ENCODE measurements at regions of chr3 and their contacts with region 1.

Region 1: DNA sequence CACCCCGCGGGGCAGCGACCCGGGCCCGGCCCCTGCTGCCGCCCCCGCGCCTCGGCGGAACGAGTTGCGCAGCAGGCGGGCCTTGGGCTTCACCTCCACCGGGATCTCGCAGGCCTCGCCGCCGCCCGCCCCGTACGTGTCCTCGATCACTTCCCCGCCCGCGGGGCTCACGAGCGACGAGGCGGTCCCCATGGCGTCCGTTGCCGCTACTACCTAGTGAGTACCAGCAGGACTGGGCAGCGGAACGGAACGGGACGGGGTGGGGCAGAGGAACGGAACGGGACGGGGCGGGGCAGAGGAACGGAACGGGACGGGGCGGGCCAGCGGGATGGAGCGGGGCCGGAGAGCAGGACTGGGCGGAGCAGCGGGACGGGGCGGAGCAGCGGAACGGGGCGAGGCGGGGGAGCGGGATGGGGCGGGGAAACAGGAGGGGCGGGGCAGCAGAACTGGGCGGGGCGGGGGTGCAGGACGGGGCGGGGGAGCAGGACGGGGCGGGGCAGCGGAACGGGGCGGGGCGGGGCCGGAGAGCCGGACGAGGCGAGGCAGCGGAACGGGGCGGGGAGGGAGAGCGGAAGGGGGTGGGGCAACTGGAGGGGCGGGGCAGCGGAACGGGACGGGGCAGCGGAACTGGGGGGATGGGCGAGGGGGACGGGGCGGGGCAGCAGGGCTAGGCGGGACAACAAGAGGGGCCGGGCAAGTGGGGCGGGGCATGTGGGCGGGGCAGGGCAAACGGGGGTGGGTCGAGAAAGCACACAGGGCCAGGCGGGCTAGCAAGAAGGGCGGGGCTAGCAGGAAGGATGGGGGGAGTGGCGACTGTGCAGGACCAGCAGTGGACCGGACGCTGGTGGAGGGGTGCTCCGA is at the start of gene NPHP3:
- DNase-seq: peak; percentile 82
- ATAC-seq: peak; percentile 80
- H3K4me3 Mint-ChIP-seq: peak within 1 kb of the TSS; percentile 90
- H3K27ac Mint-ChIP-seq: peak within 1 kb of the TSS; percentile 85
- H3K4me1 Mint-ChIP-seq: peaks cover 31% of the 10 kb centered on the region
- H3K27me3 Mint-ChIP-seq: no peaks in the 10 kb centered on the region
- CTCF ChIP-seq: no peak
- total RNA-seq, gene NPHP3: 20.2 and 23.2 TPM in 2 replicates

Region 2: DNA sequence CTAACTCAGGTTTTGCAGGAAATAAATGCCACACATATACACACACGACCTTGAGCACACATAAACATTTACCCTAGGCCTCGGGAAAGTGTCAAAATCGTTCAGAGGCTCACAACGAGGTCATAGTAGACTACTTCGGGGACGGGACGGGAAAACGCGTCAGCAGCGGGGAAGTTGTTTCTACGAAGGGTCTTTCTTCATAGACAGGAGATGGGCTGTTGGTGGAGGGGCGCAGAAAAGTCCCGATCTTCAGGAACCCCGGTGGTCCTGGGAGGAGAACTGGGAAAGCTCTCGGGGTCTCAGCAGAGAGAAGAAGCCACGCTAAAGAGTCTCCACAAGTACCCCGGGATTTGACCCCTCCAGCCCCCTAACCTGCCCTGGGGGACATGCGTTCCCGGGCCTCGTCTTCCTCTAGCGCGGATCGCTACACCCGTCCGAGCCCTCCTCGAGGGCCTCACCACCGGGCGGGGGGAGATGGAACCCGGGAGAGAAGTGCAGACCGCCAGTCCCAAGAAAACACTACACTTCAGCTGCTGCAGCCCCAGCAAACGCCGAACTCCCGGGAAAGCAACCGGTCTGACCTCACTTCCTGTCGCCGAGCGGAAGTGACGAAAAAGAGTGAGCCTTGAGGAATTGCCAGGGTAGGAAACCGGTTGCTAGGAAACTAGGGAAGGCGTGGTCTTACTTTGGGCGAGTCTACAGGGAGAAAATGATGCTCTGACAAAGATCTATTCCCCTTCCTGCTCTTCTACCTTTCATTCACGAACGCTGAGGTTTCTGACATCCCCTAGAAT is 1976.0 kb before region 1 on chr3 and contains the start of gene PIK3R4:
- CTCF ChIA-PET with region 1: no interaction called
- POLR2A ChIA-PET with region 1: no interaction called
- intact Hi-C with region 1: loop called (anchors 5 kb)
- DNase-seq: peak; percentile 82
- ATAC-seq: peak; percentile 80
- H3K4me3 Mint-ChIP-seq: peak within 1 kb of the TSS; percentile 87
- H3K27ac Mint-ChIP-seq: peak within 1 kb of the TSS; percentile 91
- H3K4me1 Mint-ChIP-seq: peaks cover 53% of the 10 kb centered on the region
- H3K27me3 Mint-ChIP-seq: no peaks in the 10 kb centered on the region
- CTCF ChIP-seq: no peak
- total RNA-seq, gene PIK3R4: 22.1 and 32.4 TPM in 2 replicates

Region 3: DNA sequence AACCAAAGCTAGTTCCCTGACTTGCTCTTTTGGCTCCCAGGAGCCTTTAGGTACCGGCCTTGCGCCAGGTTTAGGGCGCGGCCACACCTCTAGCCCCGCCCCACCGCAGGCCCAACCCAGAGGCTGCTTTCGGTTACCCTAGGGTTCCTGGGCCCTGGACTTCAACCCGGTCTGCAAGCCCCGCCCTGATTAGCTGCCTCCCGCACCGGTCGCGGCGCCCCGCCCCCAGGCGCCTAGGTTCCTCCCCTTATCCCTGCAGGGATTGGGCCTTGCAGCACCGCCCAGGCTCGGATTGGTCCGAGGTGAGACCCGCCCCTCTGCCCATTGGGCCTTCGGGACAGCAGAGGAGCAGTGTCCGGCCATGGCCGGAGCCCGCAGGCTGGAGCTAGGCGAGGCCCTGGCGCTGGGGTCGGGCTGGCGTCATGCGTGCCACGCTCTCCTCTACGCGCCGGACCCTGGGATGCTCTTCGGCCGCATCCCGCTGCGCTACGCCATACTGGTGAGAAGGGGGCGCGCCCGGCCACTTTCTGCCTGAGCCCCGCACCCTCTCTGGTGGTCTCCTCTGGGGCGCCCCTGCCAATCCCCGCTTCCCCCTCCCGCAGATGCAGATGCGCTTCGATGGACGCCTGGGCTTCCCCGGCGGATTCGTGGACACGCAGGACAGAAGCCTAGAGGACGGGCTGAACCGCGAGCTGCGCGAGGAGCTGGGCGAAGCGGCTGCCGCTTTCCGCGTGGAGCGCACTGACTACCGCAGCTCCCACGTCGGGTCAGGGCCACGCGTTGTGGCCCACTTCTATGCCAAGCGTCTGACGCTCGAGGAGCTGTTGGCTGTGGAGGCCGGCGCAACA is 1340.7 kb before region 1 on chr3 and contains the start of gene NUDT16:
- CTCF ChIA-PET with region 1: no interaction called
- POLR2A ChIA-PET with region 1: no interaction called
- intact Hi-C with region 1: loop called (anchors 1 kb)
- DNase-seq: peak; percentile 98
- ATAC-seq: peak; percentile 98
- H3K4me3 Mint-ChIP-seq: peak within 1 kb of the TSS; percentile 97
- H3K27ac Mint-ChIP-seq: peak within 1 kb of the TSS; percentile 92
- H3K4me1 Mint-ChIP-seq: peaks cover 24% of the 10 kb centered on the region
- H3K27me3 Mint-ChIP-seq: no peaks in the 10 kb centered on the region
- CTCF ChIP-seq: no peak
- total RNA-seq, gene NUDT16: 15.8 TPM in 2 replicates

Region 4: GRCh38 chr3:132695422-132695821 is 27.0 kb before region 1 on chr3:
- CTCF ChIA-PET with region 1: no interaction called
- POLR2A ChIA-PET with region 1: no interaction called
- intact Hi-C with region 1: no loop called
- DNase-seq: no peak
- ATAC-seq: no peak
- H3K4me3 Mint-ChIP-seq: no peak overlapping the region
- H3K27ac Mint-ChIP-seq: no peak overlapping the region
- H3K4me1 Mint-ChIP-seq: no peaks in the 10 kb centered on the region
- H3K27me3 Mint-ChIP-seq: no peaks in the 10 kb centered on the region
- CTCF ChIP-seq: no peak

Region 5: DNA sequence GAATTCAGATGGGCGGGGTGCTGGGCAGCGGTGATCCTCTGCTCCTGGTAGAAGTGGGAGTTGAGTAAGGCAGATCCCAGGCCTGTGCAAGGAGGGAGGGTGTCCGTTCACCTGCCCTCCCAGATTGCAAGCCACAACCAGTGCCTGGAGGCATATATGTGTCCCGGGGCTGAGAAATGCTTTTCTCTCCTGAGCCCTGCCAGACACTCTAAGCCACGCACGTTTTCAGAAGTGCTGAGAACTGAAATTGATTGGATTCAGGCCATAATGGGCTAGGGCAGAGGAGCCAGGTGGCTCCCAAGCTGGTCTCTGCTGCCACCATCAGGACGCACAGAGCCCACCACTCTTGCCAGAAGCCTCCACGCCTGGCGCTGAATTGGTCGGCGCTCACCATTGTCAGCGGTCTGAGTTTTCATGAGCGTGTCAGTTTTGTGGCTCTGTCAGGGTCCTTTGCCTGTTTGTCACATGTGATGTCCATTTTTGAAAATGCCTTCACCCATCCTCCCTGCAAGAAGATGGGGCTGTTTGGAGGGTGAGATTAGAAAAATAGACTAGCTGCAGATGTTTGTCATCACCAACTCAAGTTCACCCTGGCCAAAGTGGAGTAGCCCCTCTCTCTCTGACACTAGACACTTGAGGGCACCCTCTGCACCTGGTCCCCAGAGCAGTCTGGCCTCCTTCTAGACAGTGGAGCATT is 662.1 kb after region 1 on chr3:
- CTCF ChIA-PET with region 1: interaction called, 15 read pairs
- POLR2A ChIA-PET with region 1: no interaction called
- intact Hi-C with region 1: loop called (anchors 1 kb)
- DNase-seq: peak; percentile 22
- ATAC-seq: peak; percentile 73
- H3K4me3 Mint-ChIP-seq: no peak overlapping the region
- H3K27ac Mint-ChIP-seq: no peak overlapping the region
- H3K4me1 Mint-ChIP-seq: no peaks in the 10 kb centered on the region
- H3K27me3 Mint-ChIP-seq: peaks cover 11% of the 10 kb centered on the region
- CTCF ChIP-seq: no peak

Region 6: GRCh38 chr3:133661454-133662277 is 939.3 kb after region 1 on chr3 and contains the start of gene TOPBP1:
- CTCF ChIA-PET with region 1: interaction called, 4 read pairs
- POLR2A ChIA-PET with region 1: no interaction called
- intact Hi-C with region 1: loop called (anchors 2 kb)
- DNase-seq: peak; percentile 76
- ATAC-seq: peak; percentile 86
- H3K4me3 Mint-ChIP-seq: peak within 1 kb of the TSS; percentile 98
- H3K27ac Mint-ChIP-seq: peak within 1 kb of the TSS; percentile 95
- H3K4me1 Mint-ChIP-seq: peaks cover 34% of the 10 kb centered on the region
- H3K27me3 Mint-ChIP-seq: no peaks in the 10 kb centered on the region
- CTCF ChIP-seq: no peak
- total RNA-seq, gene TOPBP1: 45.8 and 49.9 TPM in 2 replicates

Region 7: DNA sequence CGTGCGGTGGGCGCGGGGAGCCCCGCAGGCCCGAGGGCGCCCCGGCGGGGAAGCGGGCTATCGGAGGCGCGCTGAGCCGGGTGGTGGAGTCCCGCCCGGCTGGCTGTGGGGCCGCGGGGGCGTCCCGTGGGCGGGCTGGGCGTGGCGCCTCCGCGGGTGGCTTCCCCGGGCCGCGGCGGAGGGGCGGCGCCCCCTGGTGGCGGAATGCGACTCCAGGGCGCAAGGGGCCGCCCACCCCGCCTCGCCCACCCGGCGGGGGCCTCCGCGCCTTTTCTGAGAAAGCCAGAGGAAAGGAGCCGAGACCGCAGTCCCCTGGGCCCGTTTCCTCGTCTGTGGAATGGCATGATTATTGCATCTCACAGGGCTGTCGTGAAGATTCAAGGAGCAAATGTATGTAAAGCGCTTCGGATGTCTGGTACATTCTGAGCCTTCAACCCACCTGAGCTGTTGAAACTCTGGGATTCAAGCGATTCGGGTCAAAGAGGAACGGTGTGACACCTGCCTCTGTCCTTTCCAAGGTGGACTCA is 1205.2 kb after region 1 on chr3:
- CTCF ChIA-PET with region 1: interaction called, 9 read pairs
- POLR2A ChIA-PET with region 1: no interaction called
- intact Hi-C with region 1: loop called (anchors 1 kb)
- DNase-seq: peak; percentile 86
- ATAC-seq: peak; percentile 98
- H3K4me3 Mint-ChIP-seq: peak overlapping the region; percentile 77
- H3K27ac Mint-ChIP-seq: no peak overlapping the region
- H3K4me1 Mint-ChIP-seq: peaks cover 9% of the 10 kb centered on the region
- H3K27me3 Mint-ChIP-seq: peaks cover 16% of the 10 kb centered on the region
- CTCF ChIP-seq: peak; percentile 23

Measured in activated B cell treated with CpG ODN at 0.5 μM for 24 hours (primary cell).